ENCODE measurements at regions of chr4 and their contacts with region 1.

Region 1: GRCh38 chr4:128809477-128810330 is at the start of gene JADE1:
- DNase-seq: peak; percentile 86 to 94
- ATAC-seq: peak; percentile 66 to 86 (median 74)
- H3K4me3 ChIP-seq: peak within 1 kb of the TSS; percentile 63 to 98 (median 85)
- H3K27ac ChIP-seq: peak within 1 kb of the TSS; percentile 88 to 98 (median 95)
- H3K4me1 ChIP-seq: peaks cover 0 to 18% (median 12%) of the 10 kb centered on the region in 9 donors
- H3K27me3 ChIP-seq: no peaks in the 10 kb centered on the region
- CTCF ChIP-seq: peak; percentile 35 to 76 (median 57)
- total RNA-seq, gene JADE1: 19.4 to 32.3 (median 23.5) TPM

Region 2: DNA sequence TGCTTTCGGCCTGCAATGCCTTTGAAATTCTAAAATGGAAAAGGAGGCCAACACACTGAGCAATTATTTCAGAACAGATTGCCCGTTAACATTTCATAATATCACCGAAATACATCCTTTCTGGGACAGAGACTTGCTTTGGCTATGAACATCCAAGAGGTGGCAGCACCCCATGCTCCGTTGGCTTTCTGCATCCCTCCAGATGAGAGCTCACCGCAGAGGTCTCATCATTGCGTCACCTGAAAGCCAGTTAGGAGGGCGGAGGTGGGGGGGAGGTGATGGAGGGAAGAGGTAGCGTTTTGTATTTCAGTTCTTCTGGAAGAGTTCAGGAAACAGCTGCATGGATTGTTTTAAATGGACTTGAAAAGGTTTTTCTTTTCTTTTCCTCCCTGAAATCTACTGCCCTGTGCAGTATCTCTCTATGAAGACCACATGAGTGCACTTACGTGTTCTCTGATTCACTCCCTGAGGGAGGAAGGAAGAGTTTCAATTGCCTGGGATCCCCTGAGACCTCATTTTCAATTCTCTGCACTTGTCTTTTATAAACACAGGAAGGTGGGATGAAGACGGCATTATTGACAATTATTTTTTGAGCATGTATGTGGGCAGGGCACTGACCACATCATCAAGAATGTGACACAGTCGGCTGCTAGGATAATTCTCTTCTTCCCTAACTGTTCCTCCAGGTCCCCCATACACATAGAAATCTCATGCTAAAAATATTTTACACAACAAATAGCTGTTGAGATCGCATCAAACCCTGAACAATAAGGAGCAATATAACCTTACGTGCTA is 355.2 kb before region 1 on chr4:
- intact Hi-C with region 1: loop called in 5 of 10 experiments (anchors 5 to 10 kb)
- DNase-seq: peak; percentile 66 to 80
- ATAC-seq: peak; percentile 85 to 94 (median 90)
- H3K4me3 ChIP-seq: no peak overlapping the region
- H3K27ac ChIP-seq: peak overlapping the region in 2 of 10 donors; percentile 17 to 22
- H3K4me1 ChIP-seq: peaks cover 0 to 30% (median 14%) of the 10 kb centered on the region in 9 donors
- H3K27me3 ChIP-seq: no peaks in the 10 kb centered on the region
- CTCF ChIP-seq: peak; percentile 47 to 89 (median 76)

Region 3: DNA sequence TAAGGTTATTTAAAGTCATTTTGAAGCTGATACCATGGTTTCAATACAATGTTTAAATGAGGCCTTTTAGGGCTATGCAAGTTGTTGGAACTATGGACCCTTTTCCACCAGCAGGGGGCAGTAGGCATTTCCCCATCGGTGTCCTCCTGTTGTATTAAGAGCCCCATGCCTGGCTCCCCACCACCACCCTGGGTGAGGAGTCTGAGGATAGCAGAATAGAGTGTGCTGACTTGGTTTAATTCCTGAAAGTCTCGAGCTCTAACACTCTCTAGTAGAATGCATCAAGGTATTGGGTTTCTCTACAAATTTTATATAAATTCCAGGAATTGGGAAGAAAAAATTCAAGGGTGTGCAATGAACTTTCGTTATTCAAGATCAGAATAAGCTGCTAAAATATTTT is 235.0 kb before region 1 on chr4:
- intact Hi-C with region 1: loop called in 6 of 10 experiments (anchors 5 to 10 kb)
- DNase-seq: peak; percentile 22 to 60
- ATAC-seq: peak in 7 of 8 donors; percentile 30 to 66 (median 47)
- H3K4me3 ChIP-seq: no peak overlapping the region
- H3K27ac ChIP-seq: no peak overlapping the region
- H3K4me1 ChIP-seq: peaks cover 0 to 43% (median 28%) of the 10 kb centered on the region in 9 donors
- H3K27me3 ChIP-seq: no peaks in the 10 kb centered on the region
- CTCF ChIP-seq: peak; percentile 24 to 66 (median 52)

Region 4: DNA sequence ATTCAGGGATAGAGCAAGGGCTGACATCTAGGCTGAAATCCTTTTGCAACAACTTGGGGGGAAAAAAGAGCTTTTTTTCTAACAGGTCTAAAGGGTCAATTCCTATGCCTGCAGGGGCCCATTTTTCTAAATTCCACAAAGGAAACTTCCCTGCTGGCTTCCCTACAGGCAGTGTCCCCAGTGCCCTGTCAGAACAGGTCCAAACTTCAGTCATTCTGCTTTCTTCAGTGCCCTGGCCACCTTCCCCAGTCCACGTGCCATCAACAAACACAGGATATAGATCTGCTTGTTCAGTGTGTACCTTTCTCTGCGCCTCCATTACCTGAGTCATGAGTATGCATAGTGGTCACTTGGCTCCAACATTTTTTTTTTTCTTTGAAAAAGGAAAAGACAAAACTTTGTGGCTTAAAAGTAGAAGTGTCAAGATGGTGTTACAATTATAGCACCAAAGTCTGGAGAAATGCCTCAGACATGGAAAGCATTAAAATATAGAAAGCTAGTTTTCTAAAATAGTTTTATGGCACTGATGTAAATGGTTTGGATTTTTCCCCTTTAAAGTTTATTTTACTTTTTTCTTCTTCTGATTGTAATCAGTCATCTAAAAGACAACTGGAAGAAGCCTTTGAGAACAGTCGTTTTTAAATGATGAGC is 84.2 kb before region 1 on chr4:
- intact Hi-C with region 1: loop called in 1 of 10 experiments (anchors 10 kb)
- DNase-seq: no peak
- ATAC-seq: no peak
- H3K4me3 ChIP-seq: no peak overlapping the region
- H3K27ac ChIP-seq: no peak overlapping the region
- H3K4me1 ChIP-seq: peaks cover 0 to 6% (median 0%) of the 10 kb centered on the region in 9 donors
- H3K27me3 ChIP-seq: no peaks in the 10 kb centered on the region
- CTCF ChIP-seq: no peak

Region 5: GRCh38 chr4:128863312-128864075 is 53.8 kb after region 1 on chr4:
- intact Hi-C with region 1: loop called in 9 of 10 experiments (anchors 2 to 10 kb)
- DNase-seq: peak; percentile 66 to 83
- ATAC-seq: peak; percentile 48 to 71 (median 65)
- H3K4me3 ChIP-seq: peak overlapping the region in 1 of 10 donors; percentile 0
- H3K27ac ChIP-seq: peak overlapping the region in 2 of 10 donors; percentile 26 to 46
- H3K4me1 ChIP-seq: peaks cover 3 to 54% (median 42%) of the 10 kb centered on the region in 9 donors
- H3K27me3 ChIP-seq: no peaks in the 10 kb centered on the region
- CTCF ChIP-seq: peak; percentile 82 to 94 (median 88)

Measured in heart right ventricle (tissue), 16 donors.